AG04449 (cell line): ENCODE measurements at regions of chr20 and their contacts with region 1.

Region 1: GRCh38 chr20:45293041-45294002 is 13.3 kb upstream of the RBPJL start:
- DNase-seq: no peak
- H3K4me3 ChIP-seq: peak overlapping the region; percentile 61
- CTCF ChIP-seq: peak; percentile 98

Region 2: DNA sequence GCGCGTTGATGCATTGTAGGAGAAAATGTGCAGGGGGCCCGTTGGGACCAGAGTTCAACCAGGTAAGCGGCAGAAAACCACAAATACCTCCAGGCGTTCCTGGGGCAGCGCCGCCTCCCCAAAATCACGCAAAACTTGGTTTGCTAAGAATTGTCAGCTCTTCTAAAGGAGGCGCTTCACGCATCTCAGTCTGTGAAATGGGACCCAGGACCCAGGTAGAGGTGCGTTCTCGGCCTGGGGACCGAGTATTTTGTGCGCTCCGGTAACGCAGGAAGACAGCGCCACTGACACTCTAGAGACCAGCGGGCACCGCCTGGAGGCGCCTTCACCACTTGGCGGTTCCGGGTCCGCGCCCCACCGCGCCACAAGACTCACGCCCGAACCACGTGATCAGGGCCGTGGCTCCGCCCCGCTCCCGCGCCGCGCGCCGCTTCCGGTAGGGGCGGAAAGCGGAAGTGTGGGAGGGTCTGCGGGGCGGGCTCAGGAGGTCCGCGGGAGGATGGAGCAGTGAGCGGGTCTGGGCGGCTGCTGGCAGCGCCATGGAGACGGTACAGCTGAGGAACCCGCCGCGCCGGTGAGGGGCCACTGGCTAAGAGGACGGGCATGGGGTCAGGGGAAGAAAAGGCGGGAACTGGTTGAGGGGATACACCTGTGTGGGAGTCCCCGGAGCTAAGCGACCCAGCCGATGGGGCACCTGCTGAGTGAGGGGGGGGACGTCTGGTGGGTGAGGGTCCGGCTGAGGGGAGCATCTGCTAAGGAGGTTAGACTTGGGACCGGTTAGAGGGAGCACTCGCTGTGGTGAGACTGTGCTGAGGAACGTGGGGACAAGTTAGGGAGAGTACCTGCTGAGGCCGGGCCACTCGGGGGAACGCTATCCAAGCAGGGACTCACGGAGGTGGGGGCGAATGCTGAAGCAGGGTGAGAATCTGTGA is 327.0 kb before region 1 on chr20 and contains the start of gene STK4:
- CTCF ChIA-PET with region 1: interaction called, 30 read pairs
- POLR2A ChIA-PET with region 1: no interaction called
- DNase-seq: no peak
- H3K4me3 ChIP-seq: peak within 1 kb of the TSS; percentile 96
- CTCF ChIP-seq: peak; percentile 71

Region 3: DNA sequence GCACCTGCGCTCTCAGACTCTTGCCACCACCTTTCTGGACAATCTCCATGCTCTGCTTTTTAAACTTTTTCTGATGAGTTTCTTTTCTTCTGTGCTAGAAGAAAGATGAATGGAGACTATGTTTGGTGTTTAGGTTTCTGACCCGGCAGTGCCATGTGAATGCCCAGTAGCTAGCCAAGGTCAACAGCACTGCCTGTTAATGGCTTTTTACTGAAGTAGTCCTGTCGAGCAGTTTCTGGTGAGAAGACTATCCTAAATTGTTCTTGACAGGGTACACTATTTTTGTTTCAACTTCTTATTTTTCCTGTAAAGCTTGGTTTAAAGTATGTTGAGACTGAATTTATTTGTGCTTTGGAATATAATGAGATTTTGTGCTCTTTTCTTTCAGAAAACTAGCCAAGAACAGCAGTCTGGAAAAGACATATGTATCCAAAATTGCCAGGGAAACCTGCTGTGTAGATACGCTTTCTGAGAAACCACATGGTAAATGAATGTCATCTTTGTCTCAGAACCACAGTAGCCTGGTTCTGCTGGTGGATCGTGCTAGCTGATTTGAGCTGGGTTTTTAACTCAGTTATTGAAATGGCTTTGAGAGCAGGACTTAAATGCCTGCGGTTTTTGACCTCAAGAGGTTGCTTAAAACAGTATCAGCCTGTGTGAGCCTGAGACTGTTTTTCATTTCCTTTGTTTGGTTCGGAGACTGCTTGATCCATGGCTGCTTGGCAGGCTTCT is 240.5 kb before region 1 on chr20:
- CTCF ChIA-PET with region 1: interaction called, 42 read pairs
- POLR2A ChIA-PET with region 1: no interaction called
- DNase-seq: peak; percentile 57
- H3K4me3 ChIP-seq: no peak overlapping the region
- CTCF ChIP-seq: no peak

Region 4: DNA sequence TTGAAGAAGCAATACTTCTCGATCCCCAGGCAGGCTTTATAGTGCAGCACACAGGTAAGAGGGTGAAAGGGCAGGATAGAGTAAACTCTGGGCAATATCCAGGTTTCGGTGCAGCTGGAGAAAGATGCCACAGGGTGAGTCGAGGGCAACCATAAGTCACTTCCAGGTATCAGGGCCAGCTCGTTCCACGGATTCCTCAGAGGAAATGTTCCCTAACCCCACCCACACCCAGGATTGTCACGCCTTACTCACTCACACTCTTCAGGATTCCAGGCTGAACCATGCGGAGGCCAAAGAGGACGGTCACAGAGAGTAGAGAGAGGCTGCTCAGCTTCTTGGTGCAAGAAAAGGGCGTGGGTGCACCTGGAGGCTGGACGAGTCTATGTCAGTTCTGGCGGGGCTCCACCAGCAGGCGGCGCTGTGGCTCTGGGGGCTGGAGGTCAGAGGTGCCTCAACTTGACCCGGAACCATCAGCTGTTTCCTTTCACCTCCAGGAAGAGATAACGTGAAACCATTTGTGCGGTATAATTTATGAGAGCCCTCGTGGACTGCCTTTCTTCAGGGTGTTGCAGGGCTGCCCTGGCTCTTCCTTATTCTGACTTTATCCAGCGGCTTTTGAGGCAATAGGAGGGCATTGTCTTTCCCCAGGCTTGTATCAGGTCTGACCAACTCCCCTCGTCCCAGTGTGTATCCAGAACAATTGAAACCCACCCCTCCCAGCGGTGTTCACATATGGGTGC is 154.6 kb before region 1 on chr20:
- CTCF ChIA-PET with region 1: interaction called, 12 read pairs
- POLR2A ChIA-PET with region 1: no interaction called
- DNase-seq: no peak
- H3K4me3 ChIP-seq: no peak overlapping the region
- CTCF ChIP-seq: peak; percentile 52

Region 5: GRCh38 chr20:45322952-45323383 is 29.6 kb after region 1 on chr20:
- CTCF ChIA-PET with region 1: interaction called, 24 read pairs
- POLR2A ChIA-PET with region 1: no interaction called
- DNase-seq: no peak
- H3K4me3 ChIP-seq: no peak overlapping the region
- CTCF ChIP-seq: no peak

Region 6: DNA sequence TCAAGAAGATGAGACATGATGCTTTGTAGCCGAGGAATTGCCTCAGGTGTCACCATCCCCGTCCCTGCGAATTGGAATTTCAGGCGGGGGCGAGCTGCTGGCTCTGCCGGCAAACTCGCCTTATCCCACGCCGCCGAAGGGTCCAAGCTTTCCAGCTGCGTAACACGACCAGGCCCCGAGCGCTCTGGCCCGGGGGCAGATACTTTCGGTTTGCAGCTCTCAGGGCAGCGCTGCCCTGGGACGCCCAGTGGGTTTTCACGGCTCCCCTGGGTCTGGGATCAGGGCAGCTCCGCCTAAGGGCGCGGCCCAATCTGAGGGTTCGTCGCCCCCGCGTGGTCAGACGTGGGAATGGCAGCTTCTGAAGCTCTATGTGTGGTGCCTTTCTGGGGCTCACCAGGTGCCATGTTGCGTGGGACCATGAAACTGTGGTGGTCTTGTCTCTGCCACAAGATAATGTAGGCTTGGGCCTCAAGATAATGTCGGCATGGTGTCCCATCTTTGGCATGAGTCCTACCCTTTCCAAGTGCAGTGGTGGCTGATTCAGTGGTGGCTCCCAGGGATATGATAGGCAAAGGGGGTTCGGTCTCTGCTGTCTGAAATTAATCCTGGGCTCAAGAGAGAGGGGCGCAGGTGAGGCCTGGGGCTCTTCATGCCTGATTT is 143.5 kb after region 1 on chr20:
- CTCF ChIA-PET with region 1: interaction called, 13 read pairs
- POLR2A ChIA-PET with region 1: no interaction called
- DNase-seq: no peak
- H3K4me3 ChIP-seq: peak overlapping the region; percentile 60
- CTCF ChIP-seq: peak; percentile 95